Activated CD4-positive, alpha-beta T cell treated with anti-CD3 and anti-CD28 coated beads for 36 hours (primary cell): ENCODE measurements at regions of chr12 and their contacts with region 1.

Region 1: DNA sequence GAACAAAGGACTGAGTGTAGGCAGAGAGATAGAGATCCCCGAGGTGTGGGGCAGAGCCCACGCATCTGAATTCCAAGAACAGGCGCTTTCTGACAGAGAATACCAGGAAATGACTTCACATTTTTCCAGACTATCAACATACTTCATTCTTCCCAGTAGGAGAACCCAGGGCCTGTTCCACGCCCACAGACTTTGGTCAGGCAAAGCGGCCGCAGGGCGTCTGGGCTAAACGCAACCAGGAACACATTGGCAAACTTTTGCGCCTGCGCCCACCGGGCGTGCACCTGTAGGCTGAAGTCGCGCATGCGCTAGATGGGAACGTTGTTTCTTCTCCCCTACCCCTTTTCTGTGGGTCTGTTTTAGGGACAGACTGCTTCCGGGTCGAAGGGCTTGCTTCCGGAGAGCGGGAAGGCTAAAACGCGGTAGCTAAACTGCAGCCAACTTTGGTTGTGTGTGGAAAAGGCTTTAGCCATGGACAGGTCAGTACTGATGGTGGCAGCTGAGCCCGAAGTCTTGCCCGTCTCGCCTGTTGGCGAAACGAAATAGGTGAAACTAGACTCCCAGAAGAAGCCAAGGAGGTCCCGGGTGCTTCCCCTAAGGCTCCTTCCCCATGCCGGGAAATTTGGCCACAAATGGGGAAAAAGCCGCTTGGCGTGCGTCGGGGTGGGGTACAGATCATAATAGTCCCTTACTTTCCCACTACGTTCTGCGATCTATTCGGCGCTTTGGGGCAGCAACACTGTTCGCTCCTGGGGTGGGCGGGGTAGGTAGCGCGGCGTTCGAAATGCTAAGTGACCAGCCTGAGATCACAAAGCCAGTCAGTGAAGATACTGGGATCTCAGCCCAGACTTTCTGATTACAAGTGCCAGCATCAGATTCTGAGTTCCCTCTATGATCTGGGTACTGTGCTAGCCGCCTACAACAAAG is at the start of gene NUP107:
- DNase-seq: peak; percentile 98
- ATAC-seq: peak; percentile 97
- H3K4me3 Mint-ChIP-seq: peak within 1 kb of the TSS; percentile 89
- H3K27ac Mint-ChIP-seq: peak within 1 kb of the TSS; percentile 97
- H3K4me1 Mint-ChIP-seq: peaks cover 34% of the 10 kb centered on the region
- H3K27me3 Mint-ChIP-seq: no peaks in the 10 kb centered on the region
- total RNA-seq, gene NUP107: 136 to 142 TPM

Region 2: GRCh38 chr12:68223083-68223747 is 463.6 kb before region 1 on chr12:
- CTCF ChIA-PET with region 1: no interaction called
- POLR2A ChIA-PET with region 1: no interaction called
- intact Hi-C with region 1: loop called in 1 of 2 experiments (anchors 10 kb)
- DNase-seq: peak; percentile 85
- ATAC-seq: peak; percentile 95
- H3K4me3 Mint-ChIP-seq: no peak overlapping the region
- H3K27ac Mint-ChIP-seq: no peak overlapping the region
- H3K4me1 Mint-ChIP-seq: peaks cover 10% of the 10 kb centered on the region
- H3K27me3 Mint-ChIP-seq: peaks cover 13% of the 10 kb centered on the region

Region 3: DNA sequence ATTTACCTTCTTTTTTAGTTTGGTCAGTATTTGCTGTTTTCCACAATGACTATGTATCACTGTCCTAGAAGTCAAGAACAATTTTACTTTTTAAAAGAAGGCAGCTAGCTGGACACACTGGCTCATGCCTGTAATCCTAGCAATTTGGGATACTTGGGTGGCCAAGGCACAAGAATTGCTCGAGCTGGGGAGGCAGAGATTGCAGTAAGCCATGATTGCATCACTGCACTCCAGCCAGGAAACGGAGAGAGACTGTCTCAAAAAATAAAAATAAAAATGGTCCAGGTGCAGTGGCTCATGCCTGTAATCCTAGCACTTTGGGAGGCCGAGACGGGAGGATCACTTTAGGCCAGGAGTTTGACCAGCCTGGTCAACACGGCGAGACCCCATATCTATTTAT is 383.0 kb before region 1 on chr12:
- CTCF ChIA-PET with region 1: no interaction called
- POLR2A ChIA-PET with region 1: no interaction called
- intact Hi-C with region 1: no loop called
- DNase-seq: no peak
- ATAC-seq: no peak
- H3K4me3 Mint-ChIP-seq: no peak overlapping the region
- H3K27ac Mint-ChIP-seq: no peak overlapping the region
- H3K4me1 Mint-ChIP-seq: peaks cover 10% of the 10 kb centered on the region
- H3K27me3 Mint-ChIP-seq: no peaks in the 10 kb centered on the region

Region 4: DNA sequence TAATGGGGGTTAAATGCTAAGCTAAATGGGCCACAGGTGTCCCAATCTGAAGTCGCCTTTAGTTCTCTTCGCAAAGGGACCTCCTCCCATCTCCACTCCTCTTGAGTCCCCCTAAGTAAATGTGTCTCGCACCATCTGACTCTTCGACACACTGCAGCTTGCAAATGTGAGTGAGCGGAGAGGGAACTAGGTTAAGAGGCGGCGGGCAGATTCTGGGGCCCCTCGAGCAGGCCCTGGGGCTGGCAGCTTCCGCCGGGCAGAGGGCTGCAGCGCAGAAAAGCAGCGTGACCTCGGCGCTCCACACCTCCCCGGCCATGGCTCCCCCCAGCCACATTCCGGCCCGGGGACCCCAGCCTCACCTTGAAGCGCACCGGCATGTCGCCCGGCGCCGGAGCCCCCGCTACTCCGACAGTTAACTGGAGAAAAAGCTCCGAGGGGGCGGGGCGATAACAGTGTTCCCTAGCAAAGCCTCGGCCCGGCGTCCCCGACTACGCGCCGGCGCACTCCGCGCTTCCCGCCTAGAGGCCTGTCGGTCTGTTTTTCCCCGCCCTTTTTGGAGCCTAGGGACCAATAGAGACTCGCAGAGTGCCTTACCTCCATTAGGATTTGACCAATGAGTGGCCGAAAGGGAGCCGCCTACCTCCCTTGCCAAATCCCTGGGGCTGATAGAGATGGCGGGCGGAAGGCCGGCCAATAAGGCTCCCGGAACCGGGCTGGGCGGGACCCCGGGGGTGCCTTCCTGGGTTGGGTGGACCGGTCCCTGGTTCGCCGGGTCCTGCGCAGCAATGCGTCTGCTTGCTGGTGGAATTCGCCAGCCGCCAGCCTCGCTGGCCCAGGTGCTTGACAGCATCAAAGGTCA is 354.8 kb before region 1 on chr12 and contains the start of gene MDM1:
- CTCF ChIA-PET with region 1: interaction called, 3 read pairs
- POLR2A ChIA-PET with region 1: no interaction called
- intact Hi-C with region 1: loop called (anchors 1 to 2 kb)
- DNase-seq: peak; percentile 97
- ATAC-seq: peak; percentile 98
- H3K4me3 Mint-ChIP-seq: peak within 1 kb of the TSS; percentile 80
- H3K27ac Mint-ChIP-seq: peak within 1 kb of the TSS; percentile 55
- H3K4me1 Mint-ChIP-seq: peaks cover 42% of the 10 kb centered on the region
- H3K27me3 Mint-ChIP-seq: peaks cover 2% of the 10 kb centered on the region
- total RNA-seq, gene MDM1: 12.7 to 13.6 TPM

Region 5: DNA sequence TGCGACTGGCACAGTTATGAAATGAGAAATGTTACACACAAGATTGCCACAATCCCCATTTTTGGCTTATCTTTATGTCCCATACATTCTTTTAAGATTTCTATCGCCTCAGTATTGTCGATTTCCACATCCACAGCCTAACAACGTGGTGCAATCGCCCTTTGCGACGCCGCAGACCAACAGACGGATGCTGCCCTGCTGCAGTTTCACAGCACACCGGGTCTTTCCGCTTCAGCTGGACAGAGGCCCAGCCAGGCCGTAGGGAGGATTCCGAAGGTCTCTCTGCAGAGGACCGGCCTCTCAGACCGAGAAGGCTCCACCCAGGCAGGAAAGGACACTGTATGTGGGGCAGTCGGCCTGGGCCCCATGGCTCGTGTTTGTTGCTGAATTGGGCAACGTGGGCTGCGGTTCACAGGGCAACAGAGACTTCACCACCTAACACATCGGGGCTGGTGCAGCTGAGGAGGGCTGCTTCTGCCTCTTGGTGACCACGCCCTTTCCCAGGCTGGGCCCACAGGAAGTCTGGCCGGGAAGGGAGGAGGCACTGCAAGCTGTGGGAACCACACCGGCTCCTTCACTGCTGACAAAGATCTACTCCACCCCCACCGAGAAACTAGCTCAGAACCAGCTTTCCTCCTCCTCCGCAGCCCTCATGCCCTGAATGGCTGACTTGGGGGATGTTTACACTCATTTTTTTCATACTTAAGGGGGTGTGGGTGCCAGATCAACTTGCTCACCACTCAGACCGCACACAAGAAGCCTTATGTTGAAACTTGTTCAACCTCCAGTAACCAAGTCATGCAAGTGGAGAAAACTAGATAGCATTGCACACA is 321.7 kb before region 1 on chr12:
- CTCF ChIA-PET with region 1: interaction called, 5 read pairs
- POLR2A ChIA-PET with region 1: no interaction called
- intact Hi-C with region 1: loop called in 1 of 2 experiments (anchors 2 kb)
- DNase-seq: peak; percentile 91
- ATAC-seq: peak; percentile 92
- H3K4me3 Mint-ChIP-seq: peak overlapping the region; percentile 74
- H3K27ac Mint-ChIP-seq: peak overlapping the region; percentile 96
- H3K4me1 Mint-ChIP-seq: peaks cover 64% of the 10 kb centered on the region
- H3K27me3 Mint-ChIP-seq: no peaks in the 10 kb centered on the region

Region 6: GRCh38 chr12:68641138-68641537 is 45.7 kb before region 1 on chr12:
- CTCF ChIA-PET with region 1: no interaction called
- POLR2A ChIA-PET with region 1: no interaction called
- intact Hi-C with region 1: no loop called
- DNase-seq: peak; percentile 71
- ATAC-seq: peak; percentile 97
- H3K4me3 Mint-ChIP-seq: peak overlapping the region; percentile 46
- H3K27ac Mint-ChIP-seq: peak overlapping the region; percentile 75
- H3K4me1 Mint-ChIP-seq: peaks cover 84% of the 10 kb centered on the region
- H3K27me3 Mint-ChIP-seq: no peaks in the 10 kb centered on the region

Region 7: GRCh38 chr12:68745904-68746571 is 59.2 kb after region 1 on chr12 and contains the start of gene SLC35E3:
- CTCF ChIA-PET with region 1: interaction called, 3 read pairs
- POLR2A ChIA-PET with region 1: no interaction called
- intact Hi-C with region 1: loop called in 1 of 2 experiments (anchors 1 kb)
- DNase-seq: peak; percentile 96
- ATAC-seq: peak; percentile 97
- H3K4me3 Mint-ChIP-seq: peak within 1 kb of the TSS; percentile 87
- H3K27ac Mint-ChIP-seq: peak within 1 kb of the TSS; percentile 92
- H3K4me1 Mint-ChIP-seq: peaks cover 16% of the 10 kb centered on the region
- H3K27me3 Mint-ChIP-seq: no peaks in the 10 kb centered on the region
- total RNA-seq, gene SLC35E3: 3.5 to 5.1 TPM

Region 8: GRCh38 chr12:69738351-69739286 is 1051.8 kb after region 1 on chr12 and contains the start of gene RAB3IP:
- CTCF ChIA-PET with region 1: no interaction called
- POLR2A ChIA-PET with region 1: no interaction called
- intact Hi-C with region 1: loop called in 1 of 2 experiments (anchors 2 kb)
- DNase-seq: peak; percentile 97
- ATAC-seq: peak; percentile 88
- H3K4me3 Mint-ChIP-seq: peak within 1 kb of the TSS; percentile 79
- H3K27ac Mint-ChIP-seq: peak within 1 kb of the TSS; percentile 75
- H3K4me1 Mint-ChIP-seq: peaks cover 26% of the 10 kb centered on the region
- H3K27me3 Mint-ChIP-seq: peaks cover 10% of the 10 kb centered on the region
- total RNA-seq, gene RAB3IP: 30.7 to 39.9 TPM